T-cell (primary cell): ENCODE measurements at regions of chr11 and their contacts with region 1.

Region 1: DNA sequence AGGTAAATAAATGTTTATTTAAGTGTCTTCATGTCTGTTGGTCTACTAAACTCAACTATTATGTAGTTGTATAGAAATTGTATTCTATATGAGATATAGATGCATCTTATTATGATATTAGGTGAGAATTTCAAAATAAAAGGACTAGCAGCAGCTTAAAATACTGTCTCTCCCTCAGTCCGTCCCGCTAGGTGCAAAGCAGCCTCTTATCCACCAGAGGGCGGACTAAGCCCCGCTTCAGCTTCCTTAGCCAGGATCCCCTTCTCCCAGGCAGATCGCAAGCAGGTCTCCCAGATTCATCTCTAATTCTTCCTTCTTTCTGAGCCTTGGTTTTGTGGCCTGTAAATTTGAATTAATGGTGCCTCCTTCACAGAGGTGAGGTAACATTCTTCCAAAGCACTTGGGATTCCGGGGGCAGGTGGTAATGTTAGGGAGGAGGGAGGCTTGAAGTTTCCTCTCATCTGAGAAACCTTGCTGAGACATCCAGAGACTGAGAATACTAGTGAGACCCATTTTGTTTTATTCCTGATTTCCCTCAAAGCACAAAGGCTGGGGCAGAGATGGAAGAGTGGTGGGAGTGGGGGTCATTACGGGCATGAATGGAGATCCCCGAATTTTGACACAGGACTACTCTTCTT is 13.5 kb upstream of the INSC start:
- DNase-seq: peak in 24 of 35 experiments; percentile 7 to 62 (median 30)
- ATAC-seq: peak in 2 of 4 experiments; percentile 60 to 63
- H3K4me3 ChIP-seq: no peak overlapping the region
- H3K4me3 Mint-ChIP-seq: no peak overlapping the region
- H3K27ac ChIP-seq: no peak overlapping the region
- H3K27ac Mint-ChIP-seq: no peak overlapping the region
- H3K4me1 ChIP-seq: no peaks in the 10 kb centered on the region
- H3K4me1 Mint-ChIP-seq: peaks cover 0 to 3% (median 3%) of the 10 kb centered on the region in 3 donors
- H3K27me3 ChIP-seq: peaks cover 0 to 9% of the 10 kb centered on the region in 2 experiments
- H3K27me3 Mint-ChIP-seq: peaks cover 26 to 37% of the 10 kb centered on the region in 2 donors

Region 2: GRCh38 chr11:15216678-15217077 is 115.5 kb after region 1 on chr11:
- CTCF ChIA-PET with region 1: interaction called in 1 of 2 experiments, 10 read pairs
- POLR2A ChIA-PET with region 1: no interaction called
- DNase-seq: peak in 1 of 35 experiments; percentile 6
- ATAC-seq: no peak
- H3K4me3 ChIP-seq: no peak overlapping the region
- H3K4me3 Mint-ChIP-seq: no peak overlapping the region
- H3K27ac ChIP-seq: no peak overlapping the region
- H3K27ac Mint-ChIP-seq: no peak overlapping the region
- H3K4me1 ChIP-seq: no peaks in the 10 kb centered on the region
- H3K4me1 Mint-ChIP-seq: no peaks in the 10 kb centered on the region
- H3K27me3 ChIP-seq: no peaks in the 10 kb centered on the region
- H3K27me3 Mint-ChIP-seq: no peaks in the 10 kb centered on the region